Activated T-helper 1 cell treated with anti-CD3 and anti-CD28 coated beads, Interleukin-12 subunit alpha, Interleukin-12 subunit beta, Interleukin-2, Interleukin-4 antibody, amounts not matched to agents 30 ng/mL and 10 ng/mL and 1 ng/mL, durations not matched to agents 14 hours and 24 hours and 36 hours (primary cell): ENCODE measurements at regions of chr4 and their contacts with region 1.

Region 1: GRCh38 chr4:139015269-139015947 is at the start of gene NOCT:
- DNase-seq: peak; percentile 90
- H3K4me3 Mint-ChIP-seq: peak within 1 kb of the TSS; percentile 96
- H3K27ac Mint-ChIP-seq: peak within 1 kb of the TSS; percentile 91
- H3K4me1 Mint-ChIP-seq: peaks cover 43% of the 10 kb centered on the region
- H3K27me3 Mint-ChIP-seq: no peaks in the 10 kb centered on the region
- total RNA-seq, gene NOCT: 24.1 and 26.9 TPM in 2 replicates

Region 2: GRCh38 chr4:138242076-138242833 is 773.2 kb before region 1 on chr4 and contains the start of gene SLC7A11:
- intact Hi-C with region 1: loop called (anchors 1 kb)
- DNase-seq: peak; percentile 70
- H3K4me3 Mint-ChIP-seq: peak within 1 kb of the TSS; percentile 88
- H3K27ac Mint-ChIP-seq: peak within 1 kb of the TSS; percentile 83
- H3K4me1 Mint-ChIP-seq: peaks cover 32% of the 10 kb centered on the region
- H3K27me3 Mint-ChIP-seq: peaks cover 4% of the 10 kb centered on the region
- total RNA-seq, gene SLC7A11: 2.6 and 2.7 TPM in 2 replicates

Region 3: DNA sequence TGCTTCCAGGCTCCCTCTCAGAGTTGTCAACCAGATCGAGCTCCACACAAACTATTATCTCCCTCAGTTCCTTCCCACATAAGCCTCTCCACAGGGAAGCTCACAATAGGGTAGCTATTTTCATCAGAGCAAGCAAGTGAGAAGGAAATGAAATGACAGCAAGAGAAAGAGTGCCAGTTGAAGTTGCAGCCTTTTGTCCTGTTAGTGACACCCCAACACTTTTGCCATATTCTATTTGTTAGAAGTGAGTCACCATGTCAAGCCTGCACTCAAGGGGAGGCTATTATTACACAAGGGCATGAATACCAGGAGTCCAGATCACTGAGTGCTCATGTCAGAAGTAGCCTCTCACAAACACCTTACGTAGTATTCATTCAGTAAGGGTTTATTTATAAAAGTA is 266.1 kb before region 1 on chr4:
- intact Hi-C with region 1: no loop called
- DNase-seq: no peak
- H3K4me3 Mint-ChIP-seq: no peak overlapping the region
- H3K27ac Mint-ChIP-seq: no peak overlapping the region
- H3K4me1 Mint-ChIP-seq: no peaks in the 10 kb centered on the region
- H3K27me3 Mint-ChIP-seq: no peaks in the 10 kb centered on the region

Region 4: DNA sequence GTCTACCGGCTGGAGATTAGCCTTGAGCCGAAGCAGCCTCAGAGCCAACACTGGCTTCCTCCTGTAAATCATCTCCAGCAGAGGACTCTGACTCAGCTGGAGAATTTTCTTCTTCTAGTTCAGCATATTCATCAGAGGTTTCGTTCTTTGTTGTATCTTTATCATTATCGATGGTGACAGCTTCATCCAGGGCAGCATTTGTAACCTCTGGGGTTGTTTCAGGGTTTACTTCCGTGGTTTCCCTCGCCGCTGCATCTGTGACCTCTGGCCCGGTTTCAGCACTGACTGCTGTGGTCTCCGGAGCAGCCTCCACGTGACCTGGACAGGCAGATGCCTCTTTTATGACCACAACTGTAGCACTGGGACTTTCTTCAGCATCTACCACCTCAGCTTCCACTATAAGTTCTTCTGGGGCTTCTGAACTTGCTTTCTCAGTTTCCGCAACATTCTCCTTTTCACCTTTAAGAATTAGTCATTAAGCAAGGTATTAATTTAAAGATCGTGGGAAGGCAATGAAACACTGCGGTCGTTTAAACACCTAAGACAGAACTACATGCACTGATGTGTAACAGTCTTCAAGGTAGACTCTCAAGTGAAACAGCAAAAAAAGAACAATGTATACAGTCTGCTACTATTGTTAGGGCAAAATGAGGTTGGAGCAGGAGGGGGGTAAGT is 251.3 kb after region 1 on chr4:
- intact Hi-C with region 1: loop called (anchors 10 kb)
- DNase-seq: peak; percentile 70
- H3K4me3 Mint-ChIP-seq: peak overlapping the region; percentile 50
- H3K27ac Mint-ChIP-seq: peak overlapping the region; percentile 10
- H3K4me1 Mint-ChIP-seq: peaks cover 21% of the 10 kb centered on the region
- H3K27me3 Mint-ChIP-seq: peaks cover 23% of the 10 kb centered on the region

Region 5: DNA sequence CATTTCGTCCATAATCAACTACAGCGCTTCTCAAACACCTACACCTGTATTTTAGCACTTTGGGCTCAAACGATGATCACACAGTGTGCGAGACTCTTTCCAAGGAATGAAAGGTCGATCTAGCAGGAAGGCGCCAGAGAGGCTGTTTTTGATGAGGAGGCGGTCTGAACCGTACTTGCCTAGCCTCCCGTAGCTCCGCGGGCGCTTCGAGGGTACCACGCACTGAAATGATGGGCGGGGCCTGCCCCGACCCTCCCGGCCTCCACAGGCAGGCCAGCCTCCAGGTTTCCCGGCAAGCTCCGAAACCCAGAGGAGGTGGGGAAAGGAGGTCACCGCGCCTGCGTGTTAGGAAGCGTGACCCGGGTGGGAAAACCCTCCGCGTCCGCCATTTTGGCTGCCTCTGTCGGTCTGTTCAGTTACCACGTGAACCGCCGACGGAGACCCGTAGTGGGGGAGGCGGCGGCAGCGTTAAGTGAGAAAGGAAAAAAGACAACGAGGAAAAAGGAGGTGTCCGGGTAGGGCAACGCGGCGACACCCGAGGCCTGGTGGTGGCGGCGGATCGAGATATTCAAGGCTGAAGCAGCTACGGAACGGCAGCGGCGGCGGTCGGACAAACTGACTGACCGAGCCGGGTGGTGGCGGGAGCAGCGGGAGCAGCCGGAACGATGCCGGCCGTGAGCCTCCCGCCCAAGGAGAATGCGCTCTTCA is 285.9 kb after region 1 on chr4 and contains the start of gene NAA15:
- intact Hi-C with region 1: loop called (anchors 1 kb)
- DNase-seq: peak; percentile 97
- H3K4me3 Mint-ChIP-seq: peak within 1 kb of the TSS; percentile 95
- H3K27ac Mint-ChIP-seq: peak within 1 kb of the TSS; percentile 97
- H3K4me1 Mint-ChIP-seq: peaks cover 69% of the 10 kb centered on the region
- H3K27me3 Mint-ChIP-seq: no peaks in the 10 kb centered on the region
- total RNA-seq, gene NAA15: 104 and 110 TPM in 2 replicates

Region 6: DNA sequence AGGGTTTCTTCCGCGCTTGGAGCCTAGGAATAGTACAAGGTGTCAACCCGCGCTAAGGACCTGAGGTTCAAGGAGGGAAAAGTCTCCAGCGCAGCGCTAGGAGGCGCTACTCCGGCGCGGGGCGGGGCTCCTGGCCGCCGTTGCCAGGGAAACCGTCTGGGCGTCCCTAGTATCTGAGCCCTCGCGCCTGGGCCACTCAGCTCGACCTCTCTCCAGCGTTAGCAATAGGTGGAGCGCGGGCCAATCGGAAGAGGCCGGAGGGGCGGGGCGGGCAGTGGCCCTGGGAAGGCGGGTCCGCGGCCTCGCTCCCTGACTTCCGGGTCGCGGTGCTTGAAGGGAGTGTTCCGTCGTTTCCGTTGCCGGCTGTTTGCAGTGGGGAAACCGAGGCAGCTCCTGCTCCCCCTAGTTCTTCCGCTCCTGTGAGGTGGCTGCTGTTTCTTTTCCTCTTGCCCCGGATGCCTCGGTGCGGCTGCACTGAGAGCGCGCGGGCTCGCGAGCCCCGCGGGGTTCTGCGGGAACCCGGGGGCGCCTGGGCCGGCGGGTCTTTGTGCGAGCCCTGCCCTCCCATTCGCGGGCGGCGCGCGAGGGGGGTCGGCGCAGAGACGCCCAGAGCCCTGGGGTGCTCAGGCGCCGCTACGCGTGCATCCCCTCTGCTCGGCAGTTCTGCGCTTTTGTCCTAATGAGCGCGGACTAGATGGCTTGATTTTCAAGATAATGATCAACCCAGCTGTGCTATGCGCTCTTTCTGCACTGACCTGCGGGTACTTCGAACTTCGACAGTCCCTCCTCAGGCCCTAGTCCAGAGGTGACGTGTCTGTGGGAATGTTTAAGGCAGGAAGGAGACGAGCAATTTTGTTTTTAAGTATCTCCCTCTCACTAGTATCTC is 1508.7 kb after region 1 on chr4 and contains the start of gene ELMOD2:
- intact Hi-C with region 1: loop called (anchors 2 kb)
- DNase-seq: peak; percentile 97
- H3K4me3 Mint-ChIP-seq: peak within 1 kb of the TSS; percentile 88
- H3K27ac Mint-ChIP-seq: peak within 1 kb of the TSS; percentile 55
- H3K4me1 Mint-ChIP-seq: peaks cover 19% of the 10 kb centered on the region
- H3K27me3 Mint-ChIP-seq: no peaks in the 10 kb centered on the region
- total RNA-seq, gene ELMOD2: 10.8 and 15.7 TPM in 2 replicates